ENCODE measurements at regions of chr17 and their contacts with region 1.

Region 1: DNA sequence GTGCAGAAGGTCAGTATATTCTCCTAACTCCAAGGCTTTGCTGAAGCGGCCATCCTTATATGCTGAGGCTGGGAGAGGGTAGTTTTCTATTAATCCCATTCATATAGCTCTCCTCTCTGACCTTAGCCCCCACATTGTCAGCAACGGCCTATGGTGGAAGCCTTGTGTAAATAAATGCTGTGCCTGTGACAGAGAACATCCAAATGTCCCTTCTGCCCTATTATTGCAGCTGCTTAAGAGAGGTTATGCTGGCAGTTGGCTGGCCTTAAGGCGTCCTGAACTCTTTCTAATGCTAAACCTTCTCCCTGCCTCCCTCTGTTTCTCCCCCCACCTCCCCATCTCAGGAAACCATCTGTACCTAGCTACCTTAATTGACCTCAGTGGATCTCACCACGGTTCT is 53.6 kb downstream of the ARHGAP44 start:
- DNase-seq: no peak
- CTCF ChIP-seq: no peak

Region 2: DNA sequence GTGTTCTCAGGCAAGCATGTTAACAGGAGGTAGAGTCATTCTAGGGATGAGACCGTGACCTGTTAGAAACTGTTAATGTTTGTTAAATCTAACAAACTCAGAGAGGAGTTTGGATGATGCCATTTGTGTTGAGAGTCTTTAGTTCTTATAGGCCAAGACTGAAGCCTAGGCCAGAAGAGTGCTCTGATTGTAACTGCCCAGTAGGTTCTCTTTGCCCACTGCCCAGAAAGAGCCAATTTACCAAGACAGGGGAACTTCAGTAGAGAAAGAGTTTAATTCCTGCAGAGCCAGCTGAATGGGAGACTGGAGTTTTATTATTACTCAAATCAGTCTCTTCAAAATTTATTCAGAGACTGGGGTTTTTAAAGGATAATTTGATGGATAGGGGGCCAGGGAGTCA is 11.1 kb before region 1 on chr17:
- CTCF ChIA-PET with region 1: interaction called, 10 read pairs
- POLR2A ChIA-PET with region 1: interaction called, 4 read pairs
- DNase-seq: no peak
- CTCF ChIP-seq: no peak

Measured in GM10248 (cell line).